Right ventricle myocardium inferior (tissue), 1 donor: ENCODE measurements at regions of chr13 and their contacts with region 1.

Region 1: DNA sequence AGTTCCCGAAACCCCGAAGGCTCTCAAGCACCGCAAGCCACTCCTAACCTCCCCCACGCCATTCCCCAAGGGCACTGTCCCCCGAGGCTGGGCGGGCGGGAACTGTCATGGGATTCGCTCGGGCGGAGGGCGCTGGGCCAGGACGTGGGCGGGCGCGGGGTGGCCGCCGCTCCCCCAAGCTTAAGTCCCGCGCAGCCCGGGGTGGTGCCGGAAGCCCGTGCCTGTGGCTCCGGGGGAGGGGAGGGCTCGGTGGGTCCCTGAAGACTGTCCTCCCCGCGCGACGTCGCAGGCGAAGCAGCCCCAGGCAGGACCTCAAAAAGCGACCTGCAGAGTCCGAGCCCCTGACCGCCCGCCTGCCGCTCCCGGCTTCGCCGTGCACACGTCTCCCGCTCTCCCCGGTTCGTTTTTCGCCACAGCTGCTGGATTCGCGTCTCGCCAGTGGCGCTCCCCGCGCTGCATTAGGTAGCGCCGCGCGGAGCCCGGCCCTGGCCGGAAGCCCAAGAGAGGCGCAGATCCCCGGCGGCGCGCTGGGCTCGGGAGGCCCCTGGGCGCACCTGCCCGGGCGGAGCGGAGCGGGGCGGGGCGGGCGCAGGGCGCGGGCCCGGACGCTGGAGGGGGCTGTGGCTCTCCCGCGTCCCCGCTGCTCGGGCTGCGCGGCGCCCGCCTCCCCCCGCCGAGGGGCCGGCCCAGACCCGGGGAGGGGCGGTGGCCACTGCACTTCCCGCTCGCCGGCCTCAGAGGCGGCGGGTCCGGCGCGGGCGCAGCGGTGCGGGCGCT is at the start of gene FARP1:
- DNase-seq: peak; percentile 80
- ATAC-seq: peak; percentile 97
- total RNA-seq, gene FARP1: 14.7 TPM

Region 2: DNA sequence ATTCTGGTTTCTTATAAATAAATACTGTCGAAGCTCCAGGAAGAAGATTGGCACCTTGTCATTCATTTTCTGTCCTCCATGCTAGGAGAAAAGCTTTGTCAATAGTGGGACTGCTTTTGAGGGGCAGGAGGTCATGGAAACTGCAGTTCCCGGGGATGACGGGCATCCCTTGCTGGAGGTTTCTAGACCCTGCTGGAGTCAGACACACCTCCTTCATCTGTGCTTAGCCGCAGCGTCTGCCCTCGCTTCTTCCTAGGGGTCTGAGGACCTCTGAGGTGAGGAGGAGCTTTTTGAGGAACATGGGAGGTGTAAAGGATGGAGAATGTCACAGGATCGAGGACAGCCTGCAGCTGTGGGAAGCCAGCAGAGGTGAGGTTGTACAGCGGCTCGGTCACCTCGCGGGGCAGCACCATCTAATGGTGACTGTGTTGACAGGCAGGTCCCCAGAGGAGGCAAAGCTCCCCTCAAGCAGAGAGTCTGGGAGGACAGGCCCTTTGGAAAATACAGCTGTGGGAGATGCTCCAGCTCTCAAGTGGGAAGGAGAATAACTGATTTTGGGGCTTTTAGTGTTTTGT is 207.2 kb after region 1 on chr13:
- intact Hi-C with region 1: loop called (anchors 1 kb)
- DNase-seq: no peak
- ATAC-seq: no peak

Region 3: DNA sequence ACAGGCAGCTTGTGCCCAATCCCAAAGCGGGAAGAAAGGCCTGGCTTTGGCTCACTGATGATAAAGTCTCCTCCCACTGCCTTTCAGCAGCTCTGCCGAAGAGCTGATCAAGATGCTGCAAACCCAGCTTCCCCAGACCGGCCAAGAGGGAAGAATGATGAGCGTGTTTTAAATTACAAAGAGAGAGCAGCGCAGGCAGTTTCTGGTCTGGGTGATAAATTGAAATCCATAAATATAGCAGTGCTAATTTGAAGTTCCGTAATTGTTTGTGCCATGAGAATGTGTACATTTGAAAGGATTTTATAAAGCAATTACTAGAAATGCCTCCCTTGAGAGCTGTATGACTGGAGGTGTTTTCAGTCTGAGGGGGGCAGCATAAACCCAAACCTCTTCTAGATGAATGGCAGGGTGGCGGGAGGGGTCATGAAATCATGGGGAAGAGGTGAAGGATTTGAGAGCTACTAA is 262.6 kb after region 1 on chr13:
- intact Hi-C with region 1: loop called (anchors 10 kb)
- DNase-seq: no peak
- ATAC-seq: peak; percentile 80

Region 4: DNA sequence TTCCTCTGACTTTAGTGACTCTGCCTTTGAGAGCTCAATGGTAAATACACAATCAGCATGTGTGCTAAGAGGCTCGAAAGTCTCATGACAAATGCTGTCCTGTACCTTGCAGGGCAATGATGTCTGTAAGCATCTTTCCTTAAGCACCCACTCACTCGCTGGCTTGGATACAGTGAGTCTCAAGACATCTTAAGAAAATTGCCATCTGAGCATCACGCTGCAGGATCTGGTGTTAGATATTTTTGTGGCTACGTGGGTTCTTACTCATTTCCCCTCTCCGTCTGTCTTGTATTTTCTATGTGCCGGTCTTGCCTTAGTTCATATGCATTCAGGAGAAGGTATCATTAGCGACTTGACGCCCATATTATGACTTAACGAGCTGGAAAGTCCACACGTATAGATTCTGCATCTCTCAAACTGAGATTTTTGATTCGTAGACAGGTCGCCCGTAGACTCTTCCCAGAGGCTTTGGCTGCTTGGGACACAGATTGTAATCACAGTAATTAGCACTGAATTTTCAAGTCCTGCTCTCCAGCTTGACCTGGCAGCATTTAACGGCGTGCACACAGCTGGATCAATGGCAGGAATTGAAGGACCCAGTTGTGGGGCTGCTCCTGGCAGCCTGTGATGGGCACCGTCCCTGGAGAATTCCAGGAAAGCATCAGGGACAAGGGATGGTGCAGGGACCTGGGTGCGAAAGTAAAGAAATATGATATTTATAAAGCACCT is 1597.8 kb after region 1 on chr13:
- intact Hi-C with region 1: no loop called
- DNase-seq: no peak
- ATAC-seq: no peak